A673 (cell line): ENCODE measurements at regions of chr1 and their contacts with region 1.

Region 1: DNA sequence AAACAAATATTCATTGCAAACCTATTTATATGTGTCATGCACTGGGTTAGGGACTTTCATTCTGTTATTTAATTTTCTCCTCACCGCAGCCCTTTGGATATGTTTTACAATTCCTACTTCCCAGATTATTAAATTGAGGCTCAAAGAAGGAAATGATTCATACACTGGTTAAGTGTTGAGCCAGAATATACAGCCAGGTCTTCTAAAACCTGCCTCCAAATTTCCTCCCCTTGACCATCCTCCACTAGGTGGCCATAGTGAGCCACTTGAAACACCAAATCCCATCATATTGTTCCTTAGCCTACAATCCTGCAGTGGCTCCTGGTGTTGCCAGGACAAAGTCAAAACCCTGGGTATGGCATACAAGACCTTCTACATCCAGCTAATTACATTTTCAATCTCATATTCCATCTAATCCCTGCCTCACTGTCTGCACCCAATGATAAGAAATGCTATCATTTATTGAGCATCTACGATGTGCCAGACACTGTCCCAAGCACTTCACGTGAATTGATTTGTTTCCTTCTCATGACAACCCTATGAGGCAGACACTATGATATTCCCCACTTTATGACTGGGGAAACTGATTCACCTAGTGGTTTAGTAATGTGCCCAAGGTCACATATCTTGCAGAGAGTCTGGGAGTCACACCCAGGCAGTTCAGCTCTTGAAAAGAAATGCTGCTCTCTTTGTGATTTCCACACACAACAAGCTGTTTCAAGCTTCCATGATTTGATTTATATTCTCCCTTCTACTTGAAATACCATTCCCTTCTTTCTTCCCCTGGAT is 23.6 kb upstream of the KIRREL1 start:
- DNase-seq: peak; percentile 95
- H3K4me3 ChIP-seq: no peak overlapping the region
- H3K27ac ChIP-seq: peak overlapping the region; percentile 92
- H3K4me1 ChIP-seq: peaks cover 57% of the 10 kb centered on the region
- H3K27me3 ChIP-seq: no peaks in the 10 kb centered on the region
- CTCF ChIP-seq: peak; percentile 91

Region 2: DNA sequence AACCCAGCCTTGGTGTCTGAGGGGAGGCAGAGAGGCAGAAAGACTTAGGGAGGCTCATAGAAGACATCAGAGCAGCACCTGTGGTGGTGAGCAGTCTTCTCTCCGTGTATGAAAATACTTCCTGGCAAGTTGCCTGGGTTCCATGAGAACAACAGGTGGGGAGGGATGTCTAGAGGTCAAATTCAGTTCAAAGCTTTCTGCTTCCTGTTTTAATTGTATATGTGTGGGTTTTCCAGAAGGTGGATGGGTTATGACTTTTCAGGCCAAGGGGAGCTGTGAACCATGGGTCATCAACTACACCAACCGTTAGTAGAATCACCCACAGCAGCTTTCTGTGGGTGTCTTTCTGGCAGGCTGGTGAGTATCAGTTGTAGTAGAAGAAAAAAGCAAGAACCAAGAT is 188.8 kb before region 1 on chr1:
- CTCF ChIA-PET with region 1: no interaction called
- POLR2A ChIA-PET with region 1: no interaction called
- intact Hi-C with region 1: no loop called
- DNase-seq: no peak
- H3K4me3 ChIP-seq: no peak overlapping the region
- H3K27ac ChIP-seq: no peak overlapping the region
- H3K4me1 ChIP-seq: peaks cover 14% of the 10 kb centered on the region
- H3K27me3 ChIP-seq: no peaks in the 10 kb centered on the region
- CTCF ChIP-seq: no peak

Region 3: DNA sequence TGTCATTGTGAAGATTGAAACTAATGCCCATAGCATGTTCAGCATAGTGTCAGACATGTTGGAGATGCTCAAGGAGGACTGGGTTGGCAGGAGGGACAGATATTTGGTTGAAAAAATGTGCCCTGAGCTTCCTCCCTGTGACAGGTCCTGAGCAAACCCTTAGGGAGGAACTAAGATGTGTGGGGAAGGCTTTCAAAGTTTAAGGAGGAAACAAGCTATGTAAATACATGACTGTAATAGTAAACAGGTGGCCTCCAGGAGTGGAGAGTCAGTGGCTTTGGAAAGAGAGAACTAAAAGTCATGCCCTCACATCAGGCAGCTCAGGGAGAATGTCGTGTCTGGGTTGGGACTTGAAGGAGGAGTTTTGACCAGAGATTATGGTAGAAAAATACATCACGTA is 13.9 kb after region 1 on chr1:
- CTCF ChIA-PET with region 1: interaction called, 4 read pairs
- POLR2A ChIA-PET with region 1: interaction called, 3 read pairs
- intact Hi-C with region 1: loop called (anchors 1 kb)
- DNase-seq: no peak
- H3K4me3 ChIP-seq: no peak overlapping the region
- H3K27ac ChIP-seq: peak overlapping the region; percentile 99
- H3K4me1 ChIP-seq: peaks cover 70% of the 10 kb centered on the region
- H3K27me3 ChIP-seq: no peaks in the 10 kb centered on the region
- CTCF ChIP-seq: no peak

Region 4: GRCh38 chr1:158035976-158036583 is 66.2 kb after region 1 on chr1:
- CTCF ChIA-PET with region 1: no interaction called
- POLR2A ChIA-PET with region 1: no interaction called
- intact Hi-C with region 1: loop called (anchors 2 kb)
- DNase-seq: peak; percentile 72
- H3K4me3 ChIP-seq: no peak overlapping the region
- H3K27ac ChIP-seq: no peak overlapping the region
- H3K4me1 ChIP-seq: peaks cover 59% of the 10 kb centered on the region
- H3K27me3 ChIP-seq: no peaks in the 10 kb centered on the region
- CTCF ChIP-seq: peak; percentile 89

Region 5: GRCh38 chr1:158087320-158087927 is 117.5 kb after region 1 on chr1:
- CTCF ChIA-PET with region 1: no interaction called
- POLR2A ChIA-PET with region 1: no interaction called
- intact Hi-C with region 1: loop called (anchors 1 kb)
- DNase-seq: peak; percentile 87
- H3K4me3 ChIP-seq: no peak overlapping the region
- H3K27ac ChIP-seq: peak overlapping the region; percentile 45
- H3K4me1 ChIP-seq: no peaks in the 10 kb centered on the region
- H3K27me3 ChIP-seq: no peaks in the 10 kb centered on the region
- CTCF ChIP-seq: peak; percentile 94

Region 6: DNA sequence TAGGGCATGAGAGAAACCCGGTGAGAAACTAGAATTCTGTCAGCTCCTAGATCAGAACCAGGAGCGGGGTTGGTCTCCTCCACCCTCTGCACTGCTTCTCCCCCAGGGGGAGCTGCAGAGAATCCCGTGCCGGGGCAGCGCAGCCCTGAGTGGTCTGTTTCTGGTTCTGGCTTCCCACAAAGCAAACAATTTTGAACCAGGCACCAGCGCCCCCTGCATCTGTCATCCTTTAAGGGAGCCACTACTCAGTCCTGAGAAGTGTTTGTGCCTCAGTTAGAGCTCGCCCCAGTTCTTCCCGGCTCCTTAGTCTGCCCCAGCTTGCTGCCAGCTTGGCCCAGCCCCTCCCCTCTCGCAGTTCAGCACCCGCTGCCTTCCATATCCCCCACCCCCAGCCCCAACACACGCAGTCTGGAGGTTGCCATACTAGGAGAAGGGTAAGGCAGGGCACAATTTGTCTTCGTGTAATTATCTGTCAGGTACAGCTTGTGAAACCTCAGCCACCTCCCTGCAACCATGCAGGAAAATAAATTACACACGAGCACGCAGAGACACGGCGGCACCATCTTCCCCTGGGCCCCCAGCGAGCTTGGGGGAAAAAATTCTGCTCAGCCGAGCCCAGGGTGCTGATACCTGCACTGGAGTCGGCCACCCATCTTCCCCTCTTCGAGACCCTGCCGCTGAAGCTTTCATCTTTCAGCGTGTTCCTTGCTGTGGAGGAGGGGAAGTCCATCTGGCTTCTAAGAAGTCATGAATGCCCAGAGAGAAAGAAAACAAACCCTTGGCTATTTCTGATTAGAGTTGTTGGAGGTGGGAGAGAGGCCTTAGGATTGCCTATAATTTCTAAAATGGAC is 148.2 kb after region 1 on chr1:
- CTCF ChIA-PET with region 1: interaction called, 165 read pairs
- POLR2A ChIA-PET with region 1: no interaction called
- intact Hi-C with region 1: no loop called
- DNase-seq: peak; percentile 79
- H3K4me3 ChIP-seq: no peak overlapping the region
- H3K27ac ChIP-seq: peak overlapping the region; percentile 76
- H3K4me1 ChIP-seq: peaks cover 65% of the 10 kb centered on the region
- H3K27me3 ChIP-seq: no peaks in the 10 kb centered on the region
- CTCF ChIP-seq: peak; percentile 67

Region 7: DNA sequence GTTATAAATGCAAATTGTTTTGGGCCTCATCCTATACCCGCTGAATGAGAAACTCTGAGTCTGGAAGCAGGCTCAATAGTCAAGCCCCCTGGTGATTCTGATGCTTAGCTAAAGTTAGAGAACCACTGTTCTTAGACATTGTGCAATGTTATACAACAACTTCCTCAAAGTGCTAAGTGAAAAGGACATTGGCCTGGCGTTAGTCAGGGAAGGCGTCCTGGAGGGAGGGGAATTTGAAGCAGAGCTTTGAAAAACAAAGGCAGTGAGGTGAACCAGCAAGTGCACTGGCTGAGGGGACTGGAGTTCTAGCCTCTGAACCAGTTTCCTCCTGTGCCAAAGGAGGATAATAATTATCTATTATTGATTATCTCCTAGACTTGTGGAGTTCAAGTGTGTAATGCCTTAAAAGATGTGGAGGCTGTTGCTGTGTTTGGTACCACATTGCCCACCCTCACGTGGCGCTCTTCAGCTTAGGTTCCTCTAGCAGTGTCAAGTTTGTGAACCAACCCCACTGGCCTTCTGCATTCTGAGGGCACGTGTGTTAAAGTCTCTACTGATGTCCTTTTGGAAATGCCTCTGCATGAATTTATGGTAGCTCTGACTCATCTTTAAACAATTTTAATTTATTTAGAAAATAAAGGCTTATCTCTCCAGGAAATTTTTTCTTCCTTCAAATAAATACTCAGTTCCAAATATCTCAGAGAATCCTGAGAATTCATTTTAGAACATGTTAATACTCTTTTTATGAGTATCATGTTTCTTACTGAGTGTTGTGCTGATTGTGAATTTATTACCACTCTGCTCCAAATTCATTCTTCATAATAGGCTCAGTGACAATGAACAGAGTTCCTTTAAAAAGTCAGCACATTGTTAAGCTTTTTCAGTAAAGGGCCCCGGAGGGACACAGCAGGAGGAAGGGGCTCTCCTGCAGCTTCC is 216.1 kb after region 1 on chr1:
- CTCF ChIA-PET with region 1: no interaction called
- POLR2A ChIA-PET with region 1: no interaction called
- intact Hi-C with region 1: loop called (anchors 5 kb)
- DNase-seq: peak; percentile 85
- H3K4me3 ChIP-seq: no peak overlapping the region
- H3K27ac ChIP-seq: no peak overlapping the region
- H3K4me1 ChIP-seq: peaks cover 19% of the 10 kb centered on the region
- H3K27me3 ChIP-seq: peaks cover 6% of the 10 kb centered on the region
- CTCF ChIP-seq: no peak